ENCODE measurements at regions of chr1 and their contacts with region 1.

Region 1: GRCh38 chr1:241847796-241848685 is at the start of gene EXO1:
- DNase-seq: peak; percentile 97
- ATAC-seq: peak; percentile 90
- H3K4me3 ChIP-seq: peak within 1 kb of the TSS; percentile 84
- H3K27ac ChIP-seq: peak within 1 kb of the TSS; percentile 89
- H3K4me1 ChIP-seq: peaks cover 18% of the 10 kb centered on the region
- H3K27me3 ChIP-seq: no peaks in the 10 kb centered on the region
- CTCF ChIP-seq: peak; percentile 66
- total RNA-seq, gene EXO1: 41.3 and 53.6 TPM in 2 replicates

Region 2: DNA sequence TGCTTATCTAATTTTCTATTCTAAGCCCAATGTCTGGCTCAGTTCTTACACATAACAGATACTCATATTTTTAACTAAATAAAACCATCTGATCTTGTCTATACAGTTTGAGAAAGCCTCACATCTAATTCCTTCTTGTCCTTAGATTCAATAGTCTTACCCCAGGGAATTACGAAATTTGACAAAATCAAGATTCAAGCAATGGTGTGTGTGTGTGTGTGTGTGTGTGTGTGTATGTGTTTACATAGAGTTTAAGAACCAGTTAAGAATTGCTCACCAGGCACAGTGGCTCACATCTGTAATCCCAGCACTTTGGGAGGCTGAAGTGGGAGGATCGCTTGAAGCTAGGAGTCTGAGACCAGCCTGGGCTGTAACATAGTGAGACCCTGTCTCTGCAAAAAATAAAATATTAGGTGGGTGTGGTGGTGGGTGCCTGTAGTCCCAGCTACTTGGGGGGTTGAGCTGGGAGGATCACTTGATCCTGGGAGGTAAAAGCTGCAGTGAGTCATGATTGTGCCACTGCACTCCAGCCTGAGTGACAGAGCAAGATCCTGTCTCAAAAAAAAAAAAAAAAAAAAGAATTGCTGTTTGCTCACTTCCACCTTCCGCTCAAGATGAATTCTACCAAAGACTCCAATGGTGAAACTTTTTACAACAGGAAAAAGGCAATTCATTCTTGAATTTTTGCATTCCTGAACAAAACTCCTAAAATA is 189.8 kb before region 1 on chr1:
- CTCF ChIA-PET with region 1: no interaction called
- POLR2A ChIA-PET with region 1: interaction called, 12 read pairs
- intact Hi-C with region 1: no loop called
- DNase-seq: peak; percentile 76
- ATAC-seq: peak; percentile 68
- H3K4me3 ChIP-seq: no peak overlapping the region
- H3K27ac ChIP-seq: peak overlapping the region; percentile 26
- H3K4me1 ChIP-seq: peaks cover 36% of the 10 kb centered on the region
- H3K27me3 ChIP-seq: no peaks in the 10 kb centered on the region
- CTCF ChIP-seq: no peak

Region 3: DNA sequence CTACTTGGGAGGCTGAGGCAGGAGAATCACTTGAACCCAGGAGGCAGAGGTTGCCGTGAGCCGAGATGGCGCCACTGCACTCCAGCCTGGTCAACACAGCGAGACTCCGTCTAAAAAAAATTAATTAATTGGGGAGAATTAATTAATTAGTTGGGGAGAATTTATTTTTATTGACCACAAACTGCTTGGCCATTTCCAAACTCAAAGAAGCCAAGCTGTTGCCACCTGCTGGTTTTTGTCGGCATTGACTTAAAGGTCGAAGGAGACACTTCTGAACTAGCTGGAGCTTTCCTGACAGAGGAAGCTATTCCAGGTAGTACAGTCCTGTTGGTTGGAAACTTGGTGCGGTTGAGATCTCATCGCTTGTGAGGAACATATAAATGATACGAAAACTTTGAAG is 137.7 kb after region 1 on chr1:
- CTCF ChIA-PET with region 1: no interaction called
- POLR2A ChIA-PET with region 1: no interaction called
- intact Hi-C with region 1: loop called (anchors 5 kb)
- DNase-seq: peak; percentile 79
- ATAC-seq: peak; percentile 62
- H3K4me3 ChIP-seq: no peak overlapping the region
- H3K27ac ChIP-seq: no peak overlapping the region
- H3K4me1 ChIP-seq: peaks cover 27% of the 10 kb centered on the region
- H3K27me3 ChIP-seq: no peaks in the 10 kb centered on the region
- CTCF ChIP-seq: peak; percentile 78